ENCODE measurements at regions of chr10 and their contacts with region 1.

Region 1: GRCh38 chr10:103184615-103185014 is 8.5 kb downstream of the NT5C2 start:
- DNase-seq: no peak
- H3K4me3 Mint-ChIP-seq: peak overlapping the region; percentile 62
- H3K27ac Mint-ChIP-seq: peak overlapping the region; percentile 87
- H3K4me1 Mint-ChIP-seq: peaks cover 32% of the 10 kb centered on the region
- H3K27me3 Mint-ChIP-seq: no peaks in the 10 kb centered on the region
- CTCF ChIP-seq: no peak

Region 2: GRCh38 chr10:103145860-103146466 is 38.7 kb before region 1 on chr10:
- CTCF ChIA-PET with region 1: interaction called, 10 read pairs
- intact Hi-C with region 1: no loop called
- DNase-seq: peak; percentile 37
- H3K4me3 Mint-ChIP-seq: no peak overlapping the region
- H3K27ac Mint-ChIP-seq: no peak overlapping the region
- H3K4me1 Mint-ChIP-seq: peaks cover 17% of the 10 kb centered on the region
- H3K27me3 Mint-ChIP-seq: no peaks in the 10 kb centered on the region
- CTCF ChIP-seq: no peak